SK-N-SH (cell line): ENCODE measurements at regions of chr2 and their contacts with region 1.

Region 1: DNA sequence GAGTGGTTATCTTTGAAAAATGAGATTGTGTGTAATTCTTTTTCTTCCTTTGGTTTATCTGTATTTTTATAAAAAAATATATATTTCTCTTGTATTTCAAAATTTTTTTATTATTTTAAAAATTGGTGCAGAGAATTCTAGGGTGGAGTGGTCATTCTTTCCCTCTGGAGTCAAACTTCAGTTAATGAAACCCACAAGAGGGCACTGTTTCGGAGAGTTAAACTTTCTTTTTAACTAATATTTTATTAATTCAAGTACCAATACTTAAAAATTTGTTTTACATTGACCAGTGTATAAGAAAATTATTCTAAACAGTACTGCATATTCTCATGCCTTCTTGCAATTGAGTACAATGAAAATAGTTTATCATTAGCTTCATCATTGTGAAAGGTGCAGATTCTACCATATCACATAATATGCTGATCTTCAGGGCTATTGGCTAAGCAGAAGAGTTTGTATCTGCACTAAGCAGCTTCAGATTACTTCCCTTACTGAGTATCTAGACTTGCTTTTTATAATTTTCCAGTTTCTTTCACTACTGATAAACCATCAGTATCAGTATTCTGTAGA is 50.1 kb downstream of the HS1BP3 start:
- DNase-seq: no peak
- H3K4me3 ChIP-seq: no peak overlapping the region
- H3K27ac ChIP-seq: no peak overlapping the region
- H3K4me1 ChIP-seq: peaks cover 21 to 28% of the 10 kb centered on the region in 2 experiments; a peak in 2 of 4 replicates
- H3K27me3 ChIP-seq: no peaks in the 10 kb centered on the region
- CTCF ChIP-seq: peak; percentile 67
- EP300 ChIP-seq: no peak
- RAD21 ChIP-seq: peak; percentile 50; the same call in 1 of the 2 replicates

Region 2: DNA sequence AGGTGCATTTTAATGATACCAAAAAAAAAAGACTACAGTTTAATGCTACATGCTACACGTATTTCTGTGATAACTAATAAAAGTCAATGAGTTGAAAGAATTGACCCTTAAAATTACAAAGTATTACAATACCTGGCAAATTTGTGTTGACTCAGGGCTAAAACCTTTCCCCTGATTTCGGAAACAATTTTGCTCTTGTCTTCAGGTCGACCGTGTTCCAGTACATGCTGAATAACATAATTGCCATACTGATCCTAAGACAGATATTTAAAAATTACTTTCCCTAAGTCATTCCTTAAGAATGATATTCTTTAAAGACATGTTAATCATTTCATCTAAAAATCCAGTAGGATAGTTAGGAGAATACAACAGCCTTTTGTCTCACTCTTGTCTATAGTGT is 346.1 kb before region 1 on chr2:
- CTCF ChIA-PET with region 1: no interaction called
- POLR2A ChIA-PET with region 1: no interaction called
- DNase-seq: no peak
- H3K4me3 ChIP-seq: no peak overlapping the region
- H3K27ac ChIP-seq: no peak overlapping the region
- H3K4me1 ChIP-seq: no peaks in the 10 kb centered on the region
- H3K27me3 ChIP-seq: no peaks in the 10 kb centered on the region
- CTCF ChIP-seq: no peak
- EP300 ChIP-seq: no peak
- RAD21 ChIP-seq: no peak

Region 3: DNA sequence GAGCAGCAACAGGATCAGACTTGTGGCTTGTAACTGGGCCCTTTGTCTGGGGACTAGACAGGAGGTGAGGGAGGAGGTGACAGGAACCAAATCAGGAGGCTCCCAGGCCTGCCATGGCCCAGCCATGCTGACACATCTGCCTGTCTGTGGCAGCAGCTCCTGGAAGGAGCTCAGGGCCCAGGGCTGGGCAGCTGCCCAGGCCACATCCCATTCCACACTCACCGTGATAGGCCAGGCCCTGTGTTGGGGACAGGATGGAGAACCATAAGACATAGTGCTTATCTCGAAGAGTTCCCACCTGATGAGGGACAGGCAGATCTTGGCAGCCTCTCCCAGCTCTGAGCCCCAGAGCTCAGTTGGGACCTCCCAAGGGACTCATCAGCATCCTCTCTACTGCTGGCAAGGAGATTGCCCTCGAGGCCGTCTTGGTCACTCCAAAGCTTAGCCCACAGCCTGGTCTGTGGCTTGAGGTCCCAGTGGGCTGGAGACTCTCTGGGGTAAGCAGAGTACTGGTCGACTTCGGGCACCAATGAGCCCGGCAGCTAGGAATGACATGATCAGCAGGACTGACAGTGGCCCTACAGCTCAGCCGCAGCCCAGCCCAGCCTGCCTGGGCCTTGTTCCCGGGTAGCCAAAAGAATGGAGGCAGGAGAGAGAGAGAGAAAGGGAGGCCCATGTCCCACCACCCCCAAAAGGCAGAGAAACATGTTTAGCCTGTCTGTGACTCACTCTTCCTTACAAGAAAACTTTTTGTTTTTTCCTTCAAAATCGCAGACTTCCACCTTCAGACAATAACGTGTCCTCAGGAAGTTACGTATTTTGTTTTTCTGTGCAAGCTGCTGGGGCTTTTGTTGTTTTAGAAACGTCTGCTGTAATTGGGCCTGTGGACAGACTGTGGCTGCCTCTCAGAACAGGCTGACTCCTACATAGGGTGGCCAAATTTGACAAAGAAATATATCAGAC is 32.1 kb before region 1 on chr2:
- CTCF ChIA-PET with region 1: interaction called, 10 read pairs
- POLR2A ChIA-PET with region 1: no interaction called
- DNase-seq: no peak
- H3K4me3 ChIP-seq: no peak overlapping the region
- H3K27ac ChIP-seq: no peak overlapping the region
- H3K4me1 ChIP-seq: peaks cover 4 to 23% of the 10 kb centered on the region in 2 experiments; a peak in 2 of 4 replicates
- H3K27me3 ChIP-seq: no peaks in the 10 kb centered on the region
- CTCF ChIP-seq: no peak
- EP300 ChIP-seq: no peak
- RAD21 ChIP-seq: no peak

Region 4: GRCh38 chr2:20617892-20618467 is 17.1 kb after region 1 on chr2:
- CTCF ChIA-PET with region 1: interaction called, 72 read pairs
- POLR2A ChIA-PET with region 1: no interaction called
- DNase-seq: peak; percentile 82
- H3K4me3 ChIP-seq: no peak overlapping the region
- H3K27ac ChIP-seq: peak overlapping the region; percentile 67 to 90
- H3K4me1 ChIP-seq: peaks cover 18 to 42% of the 10 kb centered on the region in 2 experiments; a peak in 3 of 4 replicates
- H3K27me3 ChIP-seq: no peaks in the 10 kb centered on the region
- CTCF ChIP-seq: peak; percentile 56
- EP300 ChIP-seq: no peak; a peak in 1 of 4 replicates
- RAD21 ChIP-seq: peak; percentile 23; the same call in 1 of the 2 replicates

Region 5: GRCh38 chr2:20925265-20925889 is 324.5 kb after region 1 on chr2:
- CTCF ChIA-PET with region 1: no interaction called
- POLR2A ChIA-PET with region 1: no interaction called
- DNase-seq: no peak
- H3K4me3 ChIP-seq: no peak overlapping the region
- H3K27ac ChIP-seq: no peak overlapping the region
- H3K4me1 ChIP-seq: no peaks in the 10 kb centered on the region; a peak in 1 of 4 replicates
- H3K27me3 ChIP-seq: no peaks in the 10 kb centered on the region
- CTCF ChIP-seq: no peak
- EP300 ChIP-seq: no peak
- RAD21 ChIP-seq: no peak

Region 6: GRCh38 chr2:21590026-21590690 is 989.3 kb after region 1 on chr2:
- CTCF ChIA-PET with region 1: no interaction called
- POLR2A ChIA-PET with region 1: no interaction called
- DNase-seq: no peak
- H3K4me3 ChIP-seq: no peak overlapping the region
- H3K27ac ChIP-seq: no peak overlapping the region
- H3K4me1 ChIP-seq: peaks cover 0 to 2% of the 10 kb centered on the region in 2 experiments; a peak in 1 of 4 replicates
- H3K27me3 ChIP-seq: no peaks in the 10 kb centered on the region
- CTCF ChIP-seq: no peak
- EP300 ChIP-seq: no peak
- RAD21 ChIP-seq: no peak